ENCODE measurements at regions of chr1 and their contacts with region 1.

Region 1: DNA sequence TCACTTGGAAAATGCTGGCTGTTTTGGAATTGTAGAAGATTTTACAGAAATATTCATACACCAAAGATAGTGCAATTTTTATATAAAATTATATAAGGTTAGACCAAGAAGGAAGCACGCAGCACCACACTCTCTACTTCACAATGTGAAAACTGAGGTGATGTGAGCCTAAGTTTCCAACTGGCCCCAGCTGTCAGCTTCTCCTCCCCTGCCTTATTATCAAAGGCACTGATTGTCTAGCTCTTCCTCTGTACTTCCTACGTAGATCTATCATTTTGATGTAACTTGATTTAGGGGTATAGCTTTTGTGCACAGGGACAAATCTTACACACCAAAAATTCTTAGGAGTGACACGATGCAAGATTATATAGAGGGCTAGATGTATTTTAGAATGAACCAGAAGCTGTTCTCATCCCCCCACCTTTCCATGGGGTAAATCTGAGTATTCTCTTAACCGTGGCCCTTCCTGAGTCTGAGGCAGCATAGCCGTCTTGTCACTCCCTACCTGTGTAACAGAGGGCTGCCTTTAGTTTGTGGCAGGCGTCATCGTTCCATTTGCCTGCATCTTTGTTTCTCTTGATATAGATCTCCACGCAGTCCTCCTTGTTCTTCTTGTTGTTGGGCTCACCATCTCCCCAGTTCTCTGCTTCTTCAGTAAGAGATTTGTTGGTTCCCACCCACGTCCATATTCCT is 3.4 kb downstream of the SELL start:
- DNase-seq: no peak
- H3K4me3 ChIP-seq: no peak overlapping the region
- H3K27ac ChIP-seq: no peak overlapping the region
- H3K4me1 ChIP-seq: peaks cover 0 to 8% (median 4%) of the 10 kb centered on the region in 4 donors
- H3K27me3 ChIP-seq: no peaks in the 10 kb centered on the region
- CTCF ChIP-seq: no peak
- EP300 ChIP-seq: no peak
- POLR2A ChIP-seq: no peak

Region 2: DNA sequence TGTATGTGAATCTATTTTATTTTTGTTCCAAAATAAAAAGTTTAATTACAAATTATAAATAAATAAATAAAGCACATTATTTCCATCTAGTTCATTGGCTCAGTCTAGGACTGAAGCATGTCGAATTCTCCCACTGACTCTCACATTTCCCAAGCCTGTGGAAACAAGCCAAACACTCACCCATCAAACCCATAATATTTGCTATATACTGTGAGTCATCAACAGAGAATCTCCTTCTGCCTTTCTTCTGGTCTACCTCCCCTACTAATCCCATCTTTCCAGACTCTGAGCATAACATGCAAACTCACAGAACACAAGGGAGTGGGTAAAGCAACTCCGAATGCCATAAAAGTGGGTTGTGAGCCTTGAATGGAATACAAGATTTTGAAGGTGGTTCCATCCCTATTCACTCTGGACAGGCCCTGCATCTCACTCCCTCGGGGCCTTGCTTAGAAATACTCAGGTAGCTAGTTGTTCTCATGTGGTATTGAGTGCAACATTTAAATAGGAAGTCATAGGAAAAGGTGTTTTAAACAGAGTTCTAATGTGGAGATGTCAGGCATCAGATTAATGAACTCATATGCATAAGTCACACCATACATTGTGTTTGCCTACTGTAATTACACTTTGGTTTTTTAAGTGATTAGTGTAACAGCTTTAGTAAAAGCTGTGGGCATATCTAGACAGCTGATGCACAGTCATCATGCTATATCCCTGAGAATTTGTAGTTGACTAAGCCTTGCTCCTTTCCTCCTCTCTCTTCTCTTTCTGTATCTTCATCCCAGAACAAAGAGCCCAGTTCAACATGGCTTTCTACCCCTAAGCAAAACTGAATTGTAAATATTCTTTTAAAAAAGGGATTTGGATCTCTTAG is 168.8 kb before region 1 on chr1:
- in situ Hi-C with region 1: no loop called
- intact Hi-C with region 1: no loop called
- DNase-seq: no peak
- H3K4me3 ChIP-seq: no peak overlapping the region
- H3K27ac ChIP-seq: no peak overlapping the region
- H3K4me1 ChIP-seq: no peaks in the 10 kb centered on the region
- H3K27me3 ChIP-seq: no peaks in the 10 kb centered on the region
- CTCF ChIP-seq: no peak
- EP300 ChIP-seq: no peak
- POLR2A ChIP-seq: no peak

Region 3: DNA sequence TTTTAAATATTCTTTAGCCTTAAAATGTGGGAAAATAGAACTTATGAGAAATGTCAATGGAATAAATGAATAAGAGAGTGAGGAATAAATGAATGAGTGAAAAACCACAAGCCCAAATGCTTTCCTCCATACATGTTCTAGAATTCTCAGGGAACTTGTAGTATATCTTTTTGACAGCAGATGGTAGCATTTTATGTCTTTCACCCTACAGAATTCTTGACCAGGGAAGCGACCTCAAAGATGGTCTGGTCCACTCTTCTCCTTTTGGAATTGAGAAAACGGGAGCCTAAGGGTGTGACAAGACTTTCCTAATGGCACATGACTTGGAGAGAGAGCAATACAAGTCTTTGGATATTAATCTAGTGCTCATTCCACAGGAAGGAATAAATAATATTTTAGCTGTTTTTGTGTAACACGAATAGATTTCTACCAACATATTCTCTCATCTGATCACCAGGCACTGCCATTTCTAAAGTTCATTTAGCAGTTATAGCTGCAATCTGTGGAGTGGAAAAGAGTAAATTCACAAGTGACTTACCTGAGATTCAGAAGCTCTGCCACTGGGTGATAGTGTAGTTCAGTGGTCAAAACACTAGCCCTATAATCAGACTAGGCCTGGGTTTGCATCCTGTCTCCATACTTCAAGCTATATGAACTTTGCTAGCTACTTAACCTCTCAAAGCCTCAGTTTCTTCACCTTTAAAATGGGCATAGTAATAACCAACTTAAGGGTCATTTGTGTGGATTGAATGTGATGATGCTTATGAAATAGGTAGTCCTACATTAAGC is 106.8 kb before region 1 on chr1:
- in situ Hi-C with region 1: loop called in 1 of 4 experiments (anchors 10 kb)
- intact Hi-C with region 1: no loop called
- DNase-seq: no peak
- H3K4me3 ChIP-seq: no peak overlapping the region
- H3K27ac ChIP-seq: no peak overlapping the region
- H3K4me1 ChIP-seq: peaks cover 0 to 4% (median 0%) of the 10 kb centered on the region in 4 donors
- H3K27me3 ChIP-seq: no peaks in the 10 kb centered on the region
- CTCF ChIP-seq: peak in 4 of 5 experiments; percentile 26 to 46 (median 28)
- EP300 ChIP-seq: no peak
- POLR2A ChIP-seq: no peak